ENCODE measurements at regions of chr1 and their contacts with region 1.

Region 1: DNA sequence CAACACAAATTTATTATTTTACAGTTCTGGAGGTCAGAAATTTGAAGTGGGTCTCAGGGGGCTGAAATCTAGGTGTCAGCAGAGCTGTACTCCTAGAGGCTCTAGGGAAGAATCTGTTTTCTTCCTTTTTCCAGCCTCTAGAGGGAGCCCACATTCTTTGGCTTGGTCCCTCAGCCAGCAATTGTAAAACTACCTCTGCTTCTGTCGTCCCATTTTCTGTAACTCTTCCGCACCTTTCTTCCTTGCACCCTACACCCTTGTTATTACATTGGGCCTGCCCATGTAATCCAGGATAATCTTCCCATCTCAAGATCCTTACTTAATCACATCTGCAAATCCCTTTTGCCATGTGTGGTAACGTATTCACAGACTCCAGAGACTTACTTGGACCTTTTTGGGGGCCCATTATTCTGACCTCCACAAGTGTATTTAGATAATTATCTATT is 24.8 kb upstream of the THEM4 start:
- DNase-seq: peak; percentile 87
- H3K4me3 Mint-ChIP-seq: no peak overlapping the region
- H3K27ac Mint-ChIP-seq: no peak overlapping the region
- H3K4me1 Mint-ChIP-seq: peaks cover 5% of the 10 kb centered on the region
- H3K27me3 Mint-ChIP-seq: peaks cover 17% of the 10 kb centered on the region

Region 2: DNA sequence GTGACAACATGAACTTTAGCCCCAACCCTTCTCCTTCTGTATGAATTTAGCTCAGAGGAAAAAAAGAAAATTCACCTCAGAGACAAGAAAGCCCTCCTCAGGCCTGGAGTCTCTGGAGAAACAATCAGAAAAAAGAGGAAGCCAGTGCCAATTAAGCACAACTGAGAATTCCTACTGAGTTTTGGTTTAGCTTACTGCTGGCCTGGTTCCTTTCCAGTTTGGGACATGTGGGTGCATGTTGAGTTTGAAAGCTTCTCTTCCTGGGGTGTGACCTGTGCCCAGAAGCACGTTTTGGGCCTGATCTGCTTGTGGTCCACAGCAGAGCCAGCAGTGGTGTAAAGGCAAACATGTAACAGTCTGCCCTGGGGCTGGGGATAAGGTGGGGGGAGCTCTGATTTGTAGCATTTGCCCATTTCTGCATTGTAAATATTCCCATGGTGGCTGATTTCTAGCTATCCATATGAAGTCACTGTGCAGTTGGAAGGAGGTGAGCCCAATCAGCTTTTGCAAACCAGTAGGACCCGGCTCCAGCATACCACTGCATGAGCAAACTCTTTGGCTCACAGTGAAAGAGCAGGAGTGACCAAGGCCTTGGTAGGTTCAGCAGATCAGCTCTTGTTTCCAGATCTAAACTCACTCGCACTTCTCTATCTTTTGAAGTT is 75.9 kb before region 1 on chr1:
- intact Hi-C with region 1: no loop called
- DNase-seq: no peak
- H3K4me3 Mint-ChIP-seq: no peak overlapping the region
- H3K27ac Mint-ChIP-seq: no peak overlapping the region
- H3K4me1 Mint-ChIP-seq: no peaks in the 10 kb centered on the region
- H3K27me3 Mint-ChIP-seq: peaks cover 4% of the 10 kb centered on the region

Region 3: DNA sequence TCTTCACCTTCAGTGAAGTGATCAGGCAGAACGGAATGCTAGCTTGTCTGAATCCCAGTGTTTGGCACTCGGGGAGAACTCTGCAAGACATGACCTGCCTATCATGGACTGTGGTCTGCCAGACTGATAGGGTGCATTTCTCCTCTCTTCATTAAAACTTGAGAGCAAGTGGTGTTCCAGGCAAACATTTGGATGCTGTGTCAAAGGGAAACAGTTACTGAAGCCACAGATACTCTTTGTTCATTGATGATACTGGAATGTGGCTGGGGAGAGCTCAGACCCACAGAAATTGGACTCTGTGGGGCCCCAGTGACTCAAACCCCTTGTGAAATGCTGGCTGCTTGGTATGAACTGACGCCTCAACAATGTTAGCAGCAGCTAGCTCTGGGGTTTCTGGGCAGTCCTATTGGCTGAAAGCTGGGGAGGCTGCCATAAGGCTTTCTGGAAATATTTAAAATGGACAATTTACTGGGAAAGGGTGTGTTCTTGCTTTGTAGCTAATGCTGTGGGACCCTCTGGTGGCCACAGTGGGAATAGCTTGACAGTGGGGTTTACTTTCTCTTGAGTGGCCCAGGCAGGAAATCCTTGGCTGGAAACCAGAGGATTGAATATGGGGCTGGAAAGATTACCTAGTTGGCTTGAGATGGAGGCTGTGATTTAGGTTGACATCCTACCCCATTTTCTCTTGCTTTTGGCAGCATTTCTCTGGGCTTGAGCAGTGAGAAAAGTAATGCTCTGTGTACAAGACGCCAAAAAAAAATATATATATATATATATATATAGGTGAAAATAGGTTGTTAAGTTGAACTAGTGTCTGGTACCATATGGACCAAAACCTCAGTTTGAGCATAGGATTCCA is 67.5 kb after region 1 on chr1:
- intact Hi-C with region 1: loop called (anchors 1 kb)
- DNase-seq: peak; percentile 93
- H3K4me3 Mint-ChIP-seq: no peak overlapping the region
- H3K27ac Mint-ChIP-seq: no peak overlapping the region
- H3K4me1 Mint-ChIP-seq: peaks cover 7% of the 10 kb centered on the region
- H3K27me3 Mint-ChIP-seq: peaks cover 31% of the 10 kb centered on the region

Region 4: DNA sequence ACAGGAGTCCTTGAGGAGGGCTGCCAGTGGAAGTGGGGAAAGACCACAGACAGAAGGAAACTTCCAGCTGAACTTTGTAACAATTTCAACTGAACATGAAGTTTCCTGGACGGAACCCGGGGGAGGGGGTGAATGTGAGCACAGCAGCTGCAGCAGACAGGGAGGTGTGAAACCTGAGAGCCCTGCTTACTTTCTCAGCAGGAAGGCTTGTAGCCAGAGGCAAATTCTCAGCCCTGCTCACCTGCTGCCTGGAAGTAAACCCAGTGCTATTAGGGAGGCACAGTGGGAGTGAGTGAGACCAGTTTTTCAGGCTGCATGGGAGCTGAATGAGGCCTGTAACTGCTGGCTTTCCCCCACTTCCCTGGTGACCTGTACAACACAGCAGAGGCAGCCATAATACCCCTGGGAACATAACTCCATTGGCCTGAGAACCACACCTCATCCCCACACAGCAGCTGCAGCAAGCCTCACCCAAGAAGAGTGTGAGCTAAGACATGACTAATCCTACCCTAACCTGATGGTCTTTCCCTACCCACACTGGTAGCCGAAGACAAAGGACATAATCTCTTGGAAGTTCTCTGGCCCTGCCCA is 1188.9 kb after region 1 on chr1:
- intact Hi-C with region 1: no loop called
- DNase-seq: no peak
- H3K4me3 Mint-ChIP-seq: no peak overlapping the region
- H3K27ac Mint-ChIP-seq: no peak overlapping the region
- H3K4me1 Mint-ChIP-seq: no peaks in the 10 kb centered on the region
- H3K27me3 Mint-ChIP-seq: peaks cover 2% of the 10 kb centered on the region